WTC11 (cell line): ENCODE measurements at regions of chr1 and their contacts with region 1.

Region 1: DNA sequence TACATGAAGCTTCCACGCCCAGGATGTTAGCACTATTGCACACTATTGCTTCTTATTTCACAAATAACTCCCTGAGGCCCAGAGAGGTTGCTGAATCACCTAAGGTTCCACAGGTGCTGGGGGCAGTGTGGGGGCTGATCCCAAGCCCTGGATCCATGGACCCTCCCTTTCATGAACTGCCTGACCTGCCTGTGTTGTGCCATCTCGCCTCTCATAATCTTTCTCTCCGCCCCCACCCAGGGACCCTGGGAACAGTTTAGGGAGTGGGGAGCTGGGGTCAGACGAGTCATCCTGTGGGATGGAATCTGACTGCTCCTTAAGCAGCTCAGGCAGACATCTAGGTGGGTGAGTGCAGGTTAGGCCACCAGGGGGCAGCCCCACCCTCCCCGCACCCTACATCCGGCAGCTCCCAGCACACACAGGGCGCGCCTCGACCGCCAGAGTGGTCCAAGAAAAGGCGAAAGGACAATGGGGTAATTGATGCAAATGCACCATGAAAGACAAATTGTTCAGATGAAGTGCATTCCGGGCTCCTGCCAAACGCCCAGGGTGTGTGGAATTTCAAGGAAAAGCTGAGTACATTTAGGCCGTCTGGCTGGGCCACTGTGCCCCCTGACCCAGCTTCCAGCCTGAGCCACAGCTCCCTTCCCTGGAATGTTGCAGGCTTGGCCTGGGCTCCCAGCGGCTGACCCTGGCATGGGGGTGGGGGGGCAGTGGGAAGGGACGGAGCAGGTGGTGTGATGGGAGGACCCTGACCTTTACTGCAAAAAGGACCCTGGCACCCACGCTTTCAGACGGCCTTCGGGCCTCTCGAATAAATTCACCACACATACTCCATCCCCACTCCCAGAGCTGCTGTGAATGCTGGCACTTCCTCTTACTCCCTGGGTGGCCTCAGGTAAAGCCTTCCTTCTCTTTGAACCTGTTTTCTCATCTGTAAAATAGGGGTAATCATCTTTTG is 20.8 kb downstream of the PHLDA3 start:
- DNase-seq: peak; percentile 83
- ATAC-seq: peak; percentile 89
- H3K4me3 Mint-ChIP-seq: no peak overlapping the region
- H3K27ac Mint-ChIP-seq: no peak overlapping the region
- H3K4me1 Mint-ChIP-seq: peaks cover 35% of the 10 kb centered on the region
- H3K27me3 Mint-ChIP-seq: peaks cover 3% of the 10 kb centered on the region; the same call in 1 of the 2 replicates
- CTCF ChIP-seq: peak; percentile 80

Region 2: GRCh38 chr1:201149400-201149799 is 298.8 kb before region 1 on chr1:
- CTCF ChIA-PET with region 1: no interaction called
- POLR2A ChIA-PET with region 1: no interaction called
- DNase-seq: no peak
- ATAC-seq: peak; percentile 7; the same call in 1 of the 2 replicates
- H3K4me3 Mint-ChIP-seq: no peak overlapping the region
- H3K27ac Mint-ChIP-seq: no peak overlapping the region
- H3K4me1 Mint-ChIP-seq: peaks cover 11% of the 10 kb centered on the region
- H3K27me3 Mint-ChIP-seq: no peaks in the 10 kb centered on the region
- CTCF ChIP-seq: no peak

Region 3: DNA sequence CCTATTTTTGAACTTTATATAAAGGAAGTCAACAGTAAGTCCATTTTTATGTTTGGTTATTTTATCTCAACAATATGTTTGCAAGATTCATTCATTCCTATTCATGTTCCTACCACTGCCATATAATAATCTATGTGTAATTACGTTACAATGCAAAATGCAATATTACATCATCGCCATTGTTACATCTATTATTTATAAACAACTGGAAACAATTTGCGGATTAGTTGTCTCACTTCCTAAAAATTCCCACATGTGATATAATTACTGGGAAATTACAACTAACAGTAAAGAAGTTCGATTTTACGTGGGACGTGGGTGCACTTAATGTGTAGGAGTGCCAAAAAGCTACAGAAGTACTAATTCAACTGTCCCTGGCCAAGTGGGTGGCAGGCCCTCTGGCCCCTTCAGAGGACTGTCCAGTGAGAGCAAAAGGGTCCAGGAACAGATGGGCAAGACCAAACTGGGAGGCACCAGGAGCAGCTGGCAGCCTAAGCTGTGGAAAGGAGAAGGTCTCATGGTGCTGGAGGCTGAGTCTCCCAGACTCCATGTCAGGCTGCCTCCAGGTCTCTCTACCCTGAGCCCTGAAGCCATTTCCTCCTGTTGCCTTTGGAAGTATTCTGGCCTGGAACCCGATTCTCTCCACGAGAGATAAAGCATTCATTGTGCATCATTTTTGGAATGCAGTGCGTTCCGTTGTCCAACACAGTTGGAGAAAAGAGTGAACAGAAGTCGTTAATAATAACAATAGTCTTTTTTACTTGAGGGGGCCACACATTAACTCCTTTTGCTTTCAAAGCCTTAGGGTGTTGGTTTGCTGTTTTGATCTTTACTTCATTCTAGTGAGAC is 113.6 kb before region 1 on chr1:
- CTCF ChIA-PET with region 1: no interaction called
- POLR2A ChIA-PET with region 1: no interaction called
- DNase-seq: no peak
- ATAC-seq: no peak
- H3K4me3 Mint-ChIP-seq: no peak overlapping the region
- H3K27ac Mint-ChIP-seq: no peak overlapping the region
- H3K4me1 Mint-ChIP-seq: no peaks in the 10 kb centered on the region
- H3K27me3 Mint-ChIP-seq: no peaks in the 10 kb centered on the region
- CTCF ChIP-seq: no peak

Region 4: GRCh38 chr1:201376464-201377374 is 71.5 kb before region 1 on chr1:
- CTCF ChIA-PET with region 1: interaction called, 13 read pairs
- POLR2A ChIA-PET with region 1: no interaction called
- DNase-seq: peak; percentile 86
- ATAC-seq: peak; percentile 81
- H3K4me3 Mint-ChIP-seq: peak overlapping the region; percentile 58
- H3K27ac Mint-ChIP-seq: peak overlapping the region; percentile 98
- H3K4me1 Mint-ChIP-seq: peaks cover 54% of the 10 kb centered on the region
- H3K27me3 Mint-ChIP-seq: peaks cover 7% of the 10 kb centered on the region; the same call in 1 of the 2 replicates
- CTCF ChIP-seq: peak; percentile 56

Region 5: DNA sequence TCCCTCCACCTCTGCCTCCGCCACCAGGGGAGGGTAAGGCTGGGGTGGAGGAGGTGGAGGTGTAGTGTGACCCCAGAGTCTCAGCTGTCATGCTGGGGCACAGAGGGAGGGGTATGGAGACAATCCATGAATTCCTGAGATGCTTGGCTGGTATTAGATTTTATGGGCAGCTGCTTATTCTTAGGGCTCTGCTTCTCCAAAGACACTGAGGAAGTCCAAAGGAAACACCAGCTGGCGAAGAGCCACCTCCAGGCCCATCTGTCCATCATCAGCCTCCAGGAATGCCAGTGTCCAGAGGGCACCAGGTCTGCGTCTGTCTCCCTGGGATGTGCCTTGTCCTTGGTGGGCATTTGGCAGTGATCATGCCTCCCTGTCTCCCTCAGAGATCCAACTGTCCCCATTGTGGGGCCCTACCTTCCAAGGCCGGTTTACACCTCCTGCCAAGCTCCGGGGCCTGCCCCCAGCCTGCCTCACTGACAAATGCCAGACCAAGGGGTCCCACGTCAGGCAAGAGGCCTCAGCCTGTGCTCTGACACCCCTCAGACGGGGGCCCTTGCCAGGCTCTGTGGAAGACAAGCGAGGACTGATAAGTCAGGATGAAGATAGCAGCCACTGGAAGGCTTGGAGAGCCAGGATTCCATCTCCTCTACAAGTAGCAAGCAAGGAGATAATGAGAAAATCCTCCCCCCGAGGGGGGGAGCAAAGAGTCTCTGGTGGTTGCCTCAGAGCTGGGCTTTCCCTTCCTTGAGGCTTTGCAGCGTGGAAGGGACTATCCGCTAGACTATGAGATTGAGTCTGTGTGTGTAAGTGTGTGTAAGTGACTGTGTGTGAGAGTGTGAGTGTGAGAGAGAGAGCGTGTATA is 28.2 kb before region 1 on chr1:
- CTCF ChIA-PET with region 1: interaction called, 13 read pairs
- POLR2A ChIA-PET with region 1: no interaction called
- DNase-seq: no peak
- ATAC-seq: no peak
- H3K4me3 Mint-ChIP-seq: no peak overlapping the region
- H3K27ac Mint-ChIP-seq: no peak overlapping the region
- H3K4me1 Mint-ChIP-seq: peaks cover 9% of the 10 kb centered on the region
- H3K27me3 Mint-ChIP-seq: peaks cover 15% of the 10 kb centered on the region
- CTCF ChIP-seq: no peak

Region 6: DNA sequence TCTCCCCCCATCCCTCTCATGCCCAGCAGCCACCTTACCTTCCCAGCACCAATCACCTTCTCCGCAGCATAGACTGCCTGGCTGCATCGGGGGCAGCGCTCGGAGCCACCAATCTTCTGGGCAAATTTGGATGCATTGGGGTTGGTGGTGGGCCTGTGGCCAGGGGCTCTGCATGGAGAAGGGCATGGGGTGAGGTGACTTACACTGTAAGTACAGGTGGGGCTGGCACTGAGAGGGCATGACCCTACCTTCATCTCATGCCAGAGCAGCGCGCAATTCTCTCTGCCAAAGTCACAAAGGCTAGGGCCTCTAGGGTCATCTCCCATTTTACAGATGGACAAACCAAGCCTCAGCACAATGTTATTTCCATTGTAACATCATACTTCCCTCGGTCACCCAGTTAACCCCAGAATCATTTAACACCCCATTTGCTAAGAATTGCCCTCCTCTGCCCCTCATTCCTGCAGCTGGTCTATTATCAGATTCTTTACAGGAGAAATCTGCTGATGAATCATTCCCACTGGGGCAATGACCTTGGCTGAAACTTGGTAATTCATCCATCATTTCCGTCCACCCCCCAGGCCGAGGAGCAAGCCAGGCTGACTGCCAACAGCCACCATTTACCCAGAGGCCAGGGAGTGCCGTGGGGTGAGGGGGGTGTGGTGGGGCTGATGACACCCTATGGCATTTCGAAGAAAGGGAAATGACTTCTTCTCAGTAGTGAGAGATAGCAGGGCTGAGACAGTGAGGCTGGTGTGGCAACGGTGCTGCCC is 40.8 kb after region 1 on chr1:
- CTCF ChIA-PET with region 1: interaction called, 11 read pairs
- POLR2A ChIA-PET with region 1: no interaction called
- DNase-seq: no peak
- ATAC-seq: no peak
- H3K4me3 Mint-ChIP-seq: no peak overlapping the region
- H3K27ac Mint-ChIP-seq: no peak overlapping the region
- H3K4me1 Mint-ChIP-seq: peaks cover 9% of the 10 kb centered on the region
- H3K27me3 Mint-ChIP-seq: no peaks in the 10 kb centered on the region
- CTCF ChIP-seq: no peak

Region 7: DNA sequence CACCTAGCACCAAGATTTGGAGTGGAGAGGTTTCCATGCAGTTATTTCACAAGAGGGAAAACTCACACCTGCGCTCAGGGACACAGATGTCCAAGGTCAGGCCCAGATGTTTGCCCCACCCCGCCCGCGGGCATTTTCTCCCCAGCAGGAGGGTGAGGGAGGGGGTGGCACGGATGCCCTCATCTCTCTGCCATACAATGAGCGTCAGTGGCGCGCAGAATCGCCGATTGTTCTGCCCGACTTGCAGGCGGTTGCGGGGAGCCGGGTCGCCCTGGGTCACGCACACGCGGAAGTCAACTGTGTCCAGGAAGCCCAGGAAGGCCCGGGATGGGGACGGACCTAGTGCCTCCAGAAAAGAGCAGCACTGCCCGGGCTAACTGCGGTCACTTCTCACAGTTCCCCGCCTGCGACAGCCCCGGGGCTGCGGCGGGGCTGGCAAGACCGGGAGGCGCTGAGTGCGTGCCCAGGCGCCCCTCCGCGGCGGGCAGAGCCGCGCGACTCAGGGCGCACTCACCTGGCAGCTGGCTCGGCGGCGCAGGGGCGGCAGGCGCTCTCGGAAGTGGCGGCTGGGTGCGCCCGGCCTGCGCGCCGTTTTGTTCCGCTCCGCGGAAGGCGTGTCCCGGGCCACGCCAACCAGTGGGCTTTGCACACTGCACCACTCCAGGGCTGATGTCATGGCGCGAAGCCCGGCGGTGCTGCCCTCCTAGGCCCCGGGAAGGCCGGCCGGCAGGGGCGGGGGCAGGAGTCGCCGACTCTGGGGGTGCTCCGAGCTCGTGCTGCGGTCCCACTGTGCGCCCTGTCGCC is 58.6 kb after region 1 on chr1 and contains the start of gene CSRP1:
- CTCF ChIA-PET with region 1: interaction called, 64 read pairs
- POLR2A ChIA-PET with region 1: no interaction called
- DNase-seq: peak; percentile 49
- ATAC-seq: peak; percentile 19
- H3K4me3 Mint-ChIP-seq: peak within 1 kb of the TSS; percentile 67
- H3K27ac Mint-ChIP-seq: no peak within 1 kb of the TSS
- H3K4me1 Mint-ChIP-seq: peaks cover 49% of the 10 kb centered on the region
- H3K27me3 Mint-ChIP-seq: peaks cover 39% of the 10 kb centered on the region
- CTCF ChIP-seq: no peak
- total RNA-seq, gene CSRP1: 10.7 to 15.4 TPM (median 14.3 TPM) in 3 replicates

Region 8: GRCh38 chr1:201538612-201539551 is 90.7 kb after region 1 on chr1 and contains the start of gene NAV1:
- CTCF ChIA-PET with region 1: interaction called, 11 read pairs
- POLR2A ChIA-PET with region 1: no interaction called
- DNase-seq: peak; percentile 65
- ATAC-seq: peak; percentile 63
- H3K4me3 Mint-ChIP-seq: peak within 1 kb of the TSS; percentile 88
- H3K27ac Mint-ChIP-seq: no peak within 1 kb of the TSS
- H3K4me1 Mint-ChIP-seq: peaks cover 32% of the 10 kb centered on the region
- H3K27me3 Mint-ChIP-seq: peaks cover 64% of the 10 kb centered on the region
- CTCF ChIP-seq: no peak
- total RNA-seq, gene NAV1: 41.0 to 51.0 TPM (median 46.2 TPM) in 3 replicates

Region 9: GRCh38 chr1:201582705-201583442 is 134.7 kb after region 1 on chr1:
- CTCF ChIA-PET with region 1: no interaction called
- POLR2A ChIA-PET with region 1: no interaction called
- DNase-seq: no peak
- ATAC-seq: peak; percentile 28
- H3K4me3 Mint-ChIP-seq: no peak overlapping the region
- H3K27ac Mint-ChIP-seq: no peak overlapping the region
- H3K4me1 Mint-ChIP-seq: peaks cover 19% of the 10 kb centered on the region
- H3K27me3 Mint-ChIP-seq: peaks cover 4% of the 10 kb centered on the region; the same call in 1 of the 2 replicates
- CTCF ChIP-seq: no peak